Posterior vena cava (tissue), 2 donors: ENCODE measurements at regions of chr6 and their contacts with region 1.

Region 1: DNA sequence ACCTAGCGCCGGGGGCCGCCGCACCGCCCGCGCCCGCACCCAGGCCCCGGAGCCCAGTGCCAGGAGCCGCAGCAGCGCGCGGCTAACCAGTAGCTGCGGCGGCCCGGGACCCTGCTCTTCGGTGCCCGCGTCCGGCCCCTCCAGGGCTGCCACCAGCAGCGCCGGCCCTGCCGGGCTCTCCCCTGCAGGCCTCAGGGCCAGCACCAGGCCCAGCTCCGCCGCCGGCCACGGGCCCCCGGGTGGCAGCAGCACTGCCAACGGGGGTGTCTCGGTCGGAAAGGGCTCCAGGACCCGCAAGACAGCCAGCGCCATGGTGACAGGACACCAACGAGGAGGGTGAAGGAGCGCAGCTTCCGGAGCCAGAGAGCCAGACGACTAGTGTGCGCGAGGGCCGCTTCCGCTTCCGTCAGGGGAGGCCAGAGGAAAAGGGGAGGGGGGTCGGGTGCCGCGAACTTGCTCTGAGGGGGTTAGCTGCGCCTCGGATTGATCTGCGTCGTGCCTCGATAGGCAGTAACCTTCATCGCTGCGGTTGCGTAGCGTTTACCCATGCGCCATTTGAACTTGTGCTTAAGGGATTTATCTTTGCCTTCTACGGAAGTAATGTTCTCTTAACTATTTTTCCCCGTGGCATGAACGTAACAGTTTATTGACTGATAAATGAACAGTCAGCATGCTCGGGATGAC is at the start of gene PEX6:
- DNase-seq: peak; percentile 98
- total RNA-seq, gene PEX6: 8.8 to 12.8 TPM

Region 2: DNA sequence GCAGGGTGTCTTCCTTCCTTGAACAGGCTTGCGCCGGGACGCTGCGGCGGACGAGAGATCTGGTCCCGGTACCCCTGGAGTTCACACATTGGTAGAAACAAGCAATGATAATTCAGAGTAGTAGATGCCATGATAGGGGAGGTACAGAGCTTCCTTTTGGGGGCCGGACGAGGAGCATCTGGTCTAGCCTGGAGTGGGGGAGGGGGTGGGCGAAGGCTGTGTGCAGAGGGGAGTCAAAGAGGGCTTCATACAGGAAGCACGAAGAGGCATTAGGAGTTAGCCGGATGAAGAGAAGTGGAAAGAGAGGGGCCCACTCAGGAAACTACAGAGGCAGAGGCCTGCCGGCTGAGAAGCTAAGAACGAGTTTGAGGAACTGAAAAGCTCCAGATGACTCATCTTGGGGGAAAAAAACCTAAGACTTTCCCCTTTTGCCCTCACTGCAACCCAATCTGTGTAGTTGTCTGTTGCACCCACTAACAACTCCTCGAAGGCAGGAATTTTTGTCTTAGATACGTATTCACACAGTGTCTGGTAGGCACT is 49.1 kb before region 1 on chr6:
- intact Hi-C with region 1: loop called (anchors 5 kb)
- DNase-seq: no peak

Region 3: GRCh38 chr6:42938987-42939809 is 39.8 kb before region 1 on chr6:
- intact Hi-C with region 1: loop called (anchors 5 kb)
- DNase-seq: no peak